Gastrocnemius medialis (tissue), 4 donors: ENCODE measurements at regions of chr13 and their contacts with region 1.

Region 1: GRCh38 chr13:27977476-27978300 is 8.6 kb upstream of the CDX2 start:
- DNase-seq: no peak
- ATAC-seq: no peak
- H3K4me3 ChIP-seq: no peak overlapping the region
- H3K27ac ChIP-seq: no peak overlapping the region
- H3K4me1 ChIP-seq: peaks cover 7 to 10% of the 10 kb centered on the region in 2 donors
- H3K27me3 ChIP-seq: peaks cover 86 to 93% (median 92%) of the 10 kb centered on the region in 3 donors
- CTCF ChIP-seq: no peak
- POLR2A ChIP-seq: no peak

Region 2: GRCh38 chr13:27374650-27375049 is 603.0 kb before region 1 on chr13:
- in situ Hi-C with region 1: loop called in 3 of 4 experiments (anchors 10 kb)
- intact Hi-C with region 1: loop called (anchors 5 kb)
- DNase-seq: peak; percentile 23 to 33
- ATAC-seq: peak; percentile 88 to 94
- H3K4me3 ChIP-seq: no peak overlapping the region
- H3K27ac ChIP-seq: no peak overlapping the region
- H3K4me1 ChIP-seq: no peaks in the 10 kb centered on the region
- H3K27me3 ChIP-seq: peaks cover 0 to 8% (median 6%) of the 10 kb centered on the region in 3 donors
- CTCF ChIP-seq: peak; percentile 35 to 76 (median 54)
- POLR2A ChIP-seq: no peak

Region 3: DNA sequence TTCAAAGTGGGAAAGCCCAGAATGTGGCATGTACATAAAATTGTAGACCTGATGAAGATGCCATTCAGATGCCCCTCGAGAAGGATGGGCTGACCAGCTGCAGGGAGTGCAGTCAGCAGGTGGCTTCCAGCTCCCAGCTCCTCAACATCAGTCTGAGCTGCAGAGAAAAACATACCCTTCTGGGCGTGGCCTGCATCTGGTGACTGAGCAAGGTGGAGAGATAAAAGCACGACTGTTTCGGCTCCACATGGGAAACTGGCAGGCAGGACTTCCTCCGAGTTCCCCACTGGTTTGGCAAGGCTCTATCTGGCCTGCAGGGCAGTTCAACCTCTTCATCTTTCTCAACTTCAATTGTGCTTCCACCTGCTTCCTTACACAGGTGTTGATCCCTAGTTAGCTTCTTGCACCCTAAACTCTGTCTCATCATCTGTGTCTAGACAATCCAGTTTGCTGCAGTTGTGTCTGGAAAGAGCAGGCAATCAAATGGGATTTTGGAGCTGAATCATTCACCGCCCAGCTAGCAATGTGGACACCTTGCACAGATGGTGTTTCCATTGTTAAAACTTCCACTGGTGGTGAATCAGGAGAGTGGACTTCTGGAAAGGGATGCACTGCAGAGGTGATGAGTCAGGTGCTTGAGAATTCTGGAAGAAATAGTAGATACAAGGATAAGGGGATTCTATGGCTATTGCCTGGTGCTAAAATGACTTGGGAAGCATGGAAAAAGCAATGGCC is 299.2 kb before region 1 on chr13:
- in situ Hi-C with region 1: no loop called
- intact Hi-C with region 1: no loop called
- DNase-seq: no peak
- ATAC-seq: no peak
- H3K4me3 ChIP-seq: no peak overlapping the region
- H3K27ac ChIP-seq: no peak overlapping the region
- H3K4me1 ChIP-seq: peaks cover 0 to 9% of the 10 kb centered on the region in 2 donors
- H3K27me3 ChIP-seq: no peaks in the 10 kb centered on the region
- CTCF ChIP-seq: no peak
- POLR2A ChIP-seq: no peak

Region 4: GRCh38 chr13:27913116-27913515 is 64.6 kb before region 1 on chr13:
- in situ Hi-C with region 1: no loop called
- intact Hi-C with region 1: loop called (anchors 2 kb)
- DNase-seq: no peak
- ATAC-seq: no peak
- H3K4me3 ChIP-seq: no peak overlapping the region
- H3K27ac ChIP-seq: no peak overlapping the region
- H3K4me1 ChIP-seq: peaks cover 4 to 7% of the 10 kb centered on the region in 2 donors
- H3K27me3 ChIP-seq: peaks cover 53 to 73% (median 61%) of the 10 kb centered on the region in 3 donors
- CTCF ChIP-seq: no peak
- POLR2A ChIP-seq: no peak